B cell (primary cell): ENCODE measurements at regions of chrX and their contacts with region 1.

Region 1: DNA sequence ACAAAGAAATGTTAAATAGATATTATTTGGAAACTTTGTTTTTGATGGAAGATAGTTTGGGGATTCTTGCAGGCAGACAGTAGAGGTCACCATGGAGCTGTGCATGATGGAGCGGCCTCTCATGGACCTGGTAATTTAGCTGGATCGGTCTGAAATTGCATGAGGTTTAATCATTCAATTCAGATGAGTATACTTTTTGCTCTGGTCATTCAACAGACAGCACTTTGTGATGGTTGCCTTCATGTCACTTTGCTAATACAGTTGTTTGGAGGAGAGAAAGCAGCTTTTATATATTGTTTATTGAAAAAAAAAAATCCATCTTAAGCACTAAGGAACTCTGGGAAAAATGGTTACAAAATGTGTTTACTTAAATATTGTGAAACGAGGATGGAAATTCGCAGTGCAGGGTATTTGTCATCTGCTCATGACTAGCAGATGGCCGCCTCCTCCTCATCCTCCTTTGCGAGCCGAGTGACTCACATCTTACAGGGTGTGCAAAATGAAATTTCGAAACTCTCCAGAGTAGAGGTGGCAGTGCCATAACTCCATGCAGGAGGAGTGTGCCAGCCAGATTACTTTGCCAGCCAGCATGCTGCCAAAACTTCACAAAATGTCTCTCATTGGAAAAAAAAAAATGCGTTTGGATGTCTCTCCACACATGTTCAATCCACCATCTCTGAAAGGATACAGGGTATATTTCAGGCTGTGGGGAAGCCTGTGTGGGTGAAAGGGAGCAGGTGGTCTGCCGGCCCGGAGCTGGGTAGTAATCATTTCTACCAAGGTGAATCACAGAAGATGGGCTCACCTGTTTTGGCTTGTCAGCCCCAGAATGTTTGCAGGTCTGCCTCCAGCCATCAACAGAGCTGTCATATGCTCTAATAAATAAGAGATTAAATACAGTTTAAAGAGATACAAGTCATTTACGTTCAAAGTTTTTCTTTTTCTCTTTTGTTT is 314.9 kb upstream of the DIPK2B start:
- DNase-seq: peak; percentile 43
- ATAC-seq: no peak
- H3K4me3 ChIP-seq: no peak overlapping the region
- H3K4me3 Mint-ChIP-seq: no peak overlapping the region
- H3K27ac ChIP-seq: no peak overlapping the region
- H3K27ac Mint-ChIP-seq: no peak overlapping the region
- H3K4me1 ChIP-seq: no peaks in the 10 kb centered on the region
- H3K4me1 Mint-ChIP-seq: peaks cover 2% of the 10 kb centered on the region
- H3K27me3 ChIP-seq: no peaks in the 10 kb centered on the region
- H3K27me3 Mint-ChIP-seq: peaks cover 3% of the 10 kb centered on the region
- CTCF ChIP-seq: peak; percentile 64

Region 2: DNA sequence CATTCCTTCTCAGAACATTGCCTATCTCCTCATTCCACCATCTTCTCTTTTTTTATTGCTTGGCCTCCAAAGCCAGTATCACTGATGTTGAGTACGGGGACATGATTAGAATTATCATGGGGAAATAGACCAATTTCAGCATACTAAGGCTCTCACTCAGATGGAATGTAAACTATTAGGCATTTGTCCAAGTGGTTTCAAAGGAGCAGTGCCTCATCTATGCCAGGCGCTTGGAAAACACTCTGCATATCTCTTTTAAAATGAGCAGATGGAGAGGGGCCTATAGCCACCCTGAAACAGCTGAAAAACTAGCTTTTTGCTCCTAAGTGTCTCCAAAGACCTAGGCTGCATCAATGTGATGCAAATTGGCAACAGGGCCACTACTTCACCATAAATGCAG is 164.1 kb before region 1 on chrX:
- CTCF ChIA-PET with region 1: no interaction called
- POLR2A ChIA-PET with region 1: no interaction called
- intact Hi-C with region 1: no loop called
- DNase-seq: no peak
- ATAC-seq: no peak
- H3K4me3 ChIP-seq: no peak overlapping the region
- H3K4me3 Mint-ChIP-seq: no peak overlapping the region
- H3K27ac ChIP-seq: no peak overlapping the region
- H3K27ac Mint-ChIP-seq: no peak overlapping the region
- H3K4me1 ChIP-seq: no peaks in the 10 kb centered on the region
- H3K4me1 Mint-ChIP-seq: no peaks in the 10 kb centered on the region
- H3K27me3 ChIP-seq: no peaks in the 10 kb centered on the region
- H3K27me3 Mint-ChIP-seq: no peaks in the 10 kb centered on the region
- CTCF ChIP-seq: no peak

Region 3: DNA sequence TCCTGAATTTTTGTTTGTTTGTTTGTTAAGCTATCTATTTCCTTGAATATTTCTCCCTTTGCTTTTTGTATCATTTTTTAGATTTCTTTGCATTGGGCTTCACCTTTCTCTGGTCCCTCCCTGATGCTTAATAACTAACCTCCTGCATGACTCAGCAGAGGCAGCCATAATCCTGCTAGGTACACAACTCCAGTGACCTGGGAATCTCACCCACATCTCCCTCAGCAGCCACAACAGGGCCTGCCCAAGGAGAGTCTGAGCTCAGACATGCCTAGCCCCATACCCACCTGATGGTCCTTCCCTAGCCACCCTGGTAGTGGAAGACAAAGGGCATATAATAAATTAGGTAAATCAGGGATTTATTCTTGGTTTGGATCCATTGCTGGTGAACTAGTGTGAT is 45.2 kb before region 1 on chrX:
- CTCF ChIA-PET with region 1: no interaction called
- POLR2A ChIA-PET with region 1: no interaction called
- intact Hi-C with region 1: no loop called
- DNase-seq: no peak
- ATAC-seq: no peak
- H3K4me3 ChIP-seq: no peak overlapping the region
- H3K4me3 Mint-ChIP-seq: no peak overlapping the region
- H3K27ac ChIP-seq: no peak overlapping the region
- H3K27ac Mint-ChIP-seq: no peak overlapping the region
- H3K4me1 ChIP-seq: no peaks in the 10 kb centered on the region
- H3K4me1 Mint-ChIP-seq: no peaks in the 10 kb centered on the region
- H3K27me3 ChIP-seq: no peaks in the 10 kb centered on the region
- H3K27me3 Mint-ChIP-seq: peaks cover 5% of the 10 kb centered on the region
- CTCF ChIP-seq: no peak

Region 4: GRCh38 chrX:45843518-45843917 is 328.0 kb after region 1 on chrX:
- CTCF ChIA-PET with region 1: interaction called, 23 read pairs
- POLR2A ChIA-PET with region 1: no interaction called
- intact Hi-C with region 1: loop called (anchors 1 kb)
- DNase-seq: peak; percentile 25
- ATAC-seq: no peak
- H3K4me3 ChIP-seq: no peak overlapping the region
- H3K4me3 Mint-ChIP-seq: no peak overlapping the region
- H3K27ac ChIP-seq: no peak overlapping the region
- H3K27ac Mint-ChIP-seq: no peak overlapping the region
- H3K4me1 ChIP-seq: no peaks in the 10 kb centered on the region
- H3K4me1 Mint-ChIP-seq: no peaks in the 10 kb centered on the region
- H3K27me3 ChIP-seq: no peaks in the 10 kb centered on the region
- H3K27me3 Mint-ChIP-seq: no peaks in the 10 kb centered on the region
- CTCF ChIP-seq: peak; percentile 33

Region 5: GRCh38 chrX:45849253-45849862 is 333.8 kb after region 1 on chrX:
- CTCF ChIA-PET with region 1: interaction called, 23 read pairs
- POLR2A ChIA-PET with region 1: no interaction called
- intact Hi-C with region 1: loop called (anchors 1 kb)
- DNase-seq: peak; percentile 44
- ATAC-seq: no peak
- H3K4me3 ChIP-seq: no peak overlapping the region
- H3K4me3 Mint-ChIP-seq: peak overlapping the region; percentile 92
- H3K27ac ChIP-seq: no peak overlapping the region
- H3K27ac Mint-ChIP-seq: no peak overlapping the region
- H3K4me1 ChIP-seq: peaks cover 12 to 17% of the 10 kb centered on the region in 2 donors
- H3K4me1 Mint-ChIP-seq: peaks cover 15% of the 10 kb centered on the region
- H3K27me3 ChIP-seq: peaks cover 0 to 4% (median 3%) of the 10 kb centered on the region in 4 experiments
- H3K27me3 Mint-ChIP-seq: peaks cover 16% of the 10 kb centered on the region
- CTCF ChIP-seq: peak; percentile 40

Region 6: GRCh38 chrX:45889471-45889870 is 373.9 kb after region 1 on chrX:
- CTCF ChIA-PET with region 1: no interaction called
- POLR2A ChIA-PET with region 1: no interaction called
- intact Hi-C with region 1: no loop called
- DNase-seq: no peak
- ATAC-seq: no peak
- H3K4me3 ChIP-seq: no peak overlapping the region
- H3K4me3 Mint-ChIP-seq: no peak overlapping the region
- H3K27ac ChIP-seq: no peak overlapping the region
- H3K27ac Mint-ChIP-seq: no peak overlapping the region
- H3K4me1 ChIP-seq: no peaks in the 10 kb centered on the region
- H3K4me1 Mint-ChIP-seq: no peaks in the 10 kb centered on the region
- H3K27me3 ChIP-seq: no peaks in the 10 kb centered on the region
- H3K27me3 Mint-ChIP-seq: no peaks in the 10 kb centered on the region
- CTCF ChIP-seq: no peak

Region 7: DNA sequence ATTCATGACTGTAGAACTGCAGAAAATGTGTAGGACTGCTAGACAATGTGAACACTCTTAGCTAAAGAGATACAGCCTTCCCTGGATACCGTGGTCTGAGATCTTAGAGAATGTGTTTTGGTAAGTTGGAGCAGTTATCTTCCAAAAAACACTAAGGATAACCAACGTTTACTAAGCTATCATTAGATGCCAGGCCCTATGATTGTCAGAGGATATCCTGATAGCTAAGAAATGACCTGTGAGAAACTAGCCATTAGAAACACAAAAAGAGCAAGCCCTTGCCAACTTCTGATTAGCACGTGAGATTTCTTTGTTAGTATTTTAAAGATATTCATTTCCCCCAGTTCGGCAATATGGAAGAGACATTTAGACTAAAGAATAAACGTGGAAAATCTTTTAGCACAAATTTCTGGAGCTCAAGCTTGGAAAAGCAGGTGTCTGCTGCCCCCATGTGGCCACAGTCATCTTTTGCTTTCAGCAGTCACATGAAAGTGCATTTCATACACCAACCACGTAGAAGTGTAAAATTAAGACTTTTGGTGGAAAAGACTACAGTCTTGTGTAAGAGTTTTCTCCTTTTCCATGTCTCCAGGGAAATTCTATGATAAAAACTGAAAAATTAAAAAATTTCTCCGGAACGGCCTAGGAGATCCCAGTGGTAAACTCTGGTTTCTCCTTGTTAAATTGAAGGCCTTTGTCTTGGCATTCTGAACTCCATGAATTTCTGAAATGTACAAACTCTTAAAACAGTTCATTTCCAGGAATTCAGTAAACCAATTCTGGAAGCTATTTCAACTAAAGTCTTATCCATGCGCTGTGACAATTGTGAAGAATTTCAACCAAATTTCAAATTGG is 893.2 kb after region 1 on chrX:
- CTCF ChIA-PET with region 1: interaction called, 23 read pairs
- POLR2A ChIA-PET with region 1: no interaction called
- intact Hi-C with region 1: no loop called
- DNase-seq: peak; percentile 55
- ATAC-seq: no peak
- H3K4me3 ChIP-seq: no peak overlapping the region
- H3K4me3 Mint-ChIP-seq: no peak overlapping the region
- H3K27ac ChIP-seq: no peak overlapping the region
- H3K27ac Mint-ChIP-seq: no peak overlapping the region
- H3K4me1 ChIP-seq: no peaks in the 10 kb centered on the region
- H3K4me1 Mint-ChIP-seq: no peaks in the 10 kb centered on the region
- H3K27me3 ChIP-seq: no peaks in the 10 kb centered on the region
- H3K27me3 Mint-ChIP-seq: no peaks in the 10 kb centered on the region
- CTCF ChIP-seq: peak; percentile 78